ENCODE measurements at regions of chr15 and their contacts with region 1.

Region 1: GRCh38 chr15:59751552-59752413 is 62.7 kb upstream of the BNIP2 start:
- DNase-seq: peak in 2 of 9 experiments; percentile 69 to 81
- ATAC-seq: peak; percentile 98
- H3K4me3 ChIP-seq: no peak overlapping the region
- H3K4me3 Mint-ChIP-seq: no peak overlapping the region
- H3K27ac ChIP-seq: no peak overlapping the region
- H3K27ac Mint-ChIP-seq: peak overlapping the region; percentile 49
- H3K4me1 ChIP-seq: peaks cover 6% of the 10 kb centered on the region
- H3K4me1 Mint-ChIP-seq: peaks cover 9% of the 10 kb centered on the region
- H3K27me3 ChIP-seq: no peaks in the 10 kb centered on the region
- H3K27me3 Mint-ChIP-seq: peaks cover 3% of the 10 kb centered on the region
- CTCF ChIP-seq: peak; percentile 95

Region 2: GRCh38 chr15:59553879-59554735 is 197.7 kb before region 1 on chr15:
- CTCF ChIA-PET with region 1: no interaction called
- POLR2A ChIA-PET with region 1: no interaction called
- intact Hi-C with region 1: no loop called
- DNase-seq: no peak
- ATAC-seq: no peak
- H3K4me3 ChIP-seq: no peak overlapping the region
- H3K4me3 Mint-ChIP-seq: no peak overlapping the region
- H3K27ac ChIP-seq: no peak overlapping the region
- H3K27ac Mint-ChIP-seq: no peak overlapping the region
- H3K4me1 ChIP-seq: no peaks in the 10 kb centered on the region
- H3K4me1 Mint-ChIP-seq: peaks cover 2% of the 10 kb centered on the region
- H3K27me3 ChIP-seq: no peaks in the 10 kb centered on the region
- H3K27me3 Mint-ChIP-seq: peaks cover 6% of the 10 kb centered on the region
- CTCF ChIP-seq: no peak

Region 3: GRCh38 chr15:59741274-59741906 is 10.4 kb before region 1 on chr15:
- CTCF ChIA-PET with region 1: interaction called, 18 read pairs
- POLR2A ChIA-PET with region 1: no interaction called
- intact Hi-C with region 1: no loop called
- DNase-seq: peak in 2 of 9 experiments; percentile 17 to 33
- ATAC-seq: no peak
- H3K4me3 ChIP-seq: no peak overlapping the region
- H3K4me3 Mint-ChIP-seq: no peak overlapping the region
- H3K27ac ChIP-seq: no peak overlapping the region
- H3K27ac Mint-ChIP-seq: no peak overlapping the region
- H3K4me1 ChIP-seq: no peaks in the 10 kb centered on the region
- H3K4me1 Mint-ChIP-seq: no peaks in the 10 kb centered on the region
- H3K27me3 ChIP-seq: no peaks in the 10 kb centered on the region
- H3K27me3 Mint-ChIP-seq: peaks cover 10% of the 10 kb centered on the region
- CTCF ChIP-seq: no peak

Region 4: GRCh38 chr15:59797756-59798604 is 46.2 kb after region 1 on chr15:
- CTCF ChIA-PET with region 1: interaction called, 16 read pairs
- POLR2A ChIA-PET with region 1: no interaction called
- intact Hi-C with region 1: loop called (anchors 1 to 5 kb)
- DNase-seq: no peak
- ATAC-seq: no peak
- H3K4me3 ChIP-seq: peak overlapping the region in 1 of 2 experiments; percentile 11
- H3K4me3 Mint-ChIP-seq: peak overlapping the region; percentile 49
- H3K27ac ChIP-seq: peak overlapping the region; percentile 21 to 37
- H3K27ac Mint-ChIP-seq: peak overlapping the region; percentile 85
- H3K4me1 ChIP-seq: peaks cover 66% of the 10 kb centered on the region
- H3K4me1 Mint-ChIP-seq: peaks cover 76% of the 10 kb centered on the region
- H3K27me3 ChIP-seq: no peaks in the 10 kb centered on the region
- H3K27me3 Mint-ChIP-seq: no peaks in the 10 kb centered on the region
- CTCF ChIP-seq: no peak

Region 5: DNA sequence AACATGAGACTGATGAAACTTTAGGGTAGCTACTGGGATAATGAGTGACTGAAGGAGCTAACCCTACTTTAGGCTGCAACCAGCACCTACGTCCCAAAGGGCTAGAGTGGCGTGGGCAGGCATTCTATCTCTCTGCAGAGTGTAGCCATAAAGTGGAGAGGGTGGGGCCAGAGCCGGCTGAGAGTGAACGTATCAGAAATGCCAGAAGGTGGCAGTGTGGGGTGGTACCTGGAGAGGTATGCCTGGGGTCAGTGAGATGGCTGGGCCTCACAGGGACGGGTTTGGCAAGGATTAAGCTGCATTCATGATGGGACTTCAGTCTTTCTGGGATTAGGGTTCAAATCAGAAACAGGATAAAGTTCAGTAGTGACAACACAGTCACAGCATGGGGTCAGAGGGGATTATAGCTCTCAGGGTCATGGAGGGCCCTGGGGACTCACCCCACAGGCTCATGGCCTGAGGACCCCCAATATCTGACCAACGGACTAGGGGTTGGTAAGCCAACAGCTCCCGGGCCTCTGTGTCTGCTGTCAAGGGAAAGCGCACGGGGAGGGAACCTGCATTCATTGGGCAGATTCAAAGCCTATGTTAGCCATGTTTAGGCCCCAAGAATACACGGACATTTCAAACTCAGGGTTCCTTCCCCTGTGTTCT is 165.8 kb after region 1 on chr15:
- CTCF ChIA-PET with region 1: interaction called, 94 read pairs
- POLR2A ChIA-PET with region 1: interaction called, 3 read pairs
- intact Hi-C with region 1: loop called (anchors 1 kb)
- DNase-seq: peak; percentile 43 to 77 (median 69)
- ATAC-seq: peak; percentile 74
- H3K4me3 ChIP-seq: no peak overlapping the region
- H3K4me3 Mint-ChIP-seq: no peak overlapping the region
- H3K27ac ChIP-seq: no peak overlapping the region
- H3K27ac Mint-ChIP-seq: no peak overlapping the region
- H3K4me1 ChIP-seq: peaks cover 9% of the 10 kb centered on the region
- H3K4me1 Mint-ChIP-seq: peaks cover 18% of the 10 kb centered on the region
- H3K27me3 ChIP-seq: no peaks in the 10 kb centered on the region
- H3K27me3 Mint-ChIP-seq: peaks cover 10% of the 10 kb centered on the region
- CTCF ChIP-seq: peak; percentile 71

Region 6: GRCh38 chr15:59997070-59997701 is 245.4 kb after region 1 on chr15:
- CTCF ChIA-PET with region 1: interaction called, 4 read pairs
- POLR2A ChIA-PET with region 1: no interaction called
- intact Hi-C with region 1: loop called in 1 of 2 experiments (anchors 5 kb)
- DNase-seq: peak in 7 of 9 experiments; percentile 34 to 75 (median 63)
- ATAC-seq: peak; percentile 81
- H3K4me3 ChIP-seq: peak overlapping the region in 1 of 2 experiments; percentile 22
- H3K4me3 Mint-ChIP-seq: peak overlapping the region; percentile 26
- H3K27ac ChIP-seq: no peak overlapping the region
- H3K27ac Mint-ChIP-seq: no peak overlapping the region
- H3K4me1 ChIP-seq: peaks cover 27% of the 10 kb centered on the region
- H3K4me1 Mint-ChIP-seq: peaks cover 22% of the 10 kb centered on the region
- H3K27me3 ChIP-seq: peaks cover 85 to 94% of the 10 kb centered on the region in 2 experiments
- H3K27me3 Mint-ChIP-seq: peaks cover 91% of the 10 kb centered on the region
- CTCF ChIP-seq: no peak

Region 7: DNA sequence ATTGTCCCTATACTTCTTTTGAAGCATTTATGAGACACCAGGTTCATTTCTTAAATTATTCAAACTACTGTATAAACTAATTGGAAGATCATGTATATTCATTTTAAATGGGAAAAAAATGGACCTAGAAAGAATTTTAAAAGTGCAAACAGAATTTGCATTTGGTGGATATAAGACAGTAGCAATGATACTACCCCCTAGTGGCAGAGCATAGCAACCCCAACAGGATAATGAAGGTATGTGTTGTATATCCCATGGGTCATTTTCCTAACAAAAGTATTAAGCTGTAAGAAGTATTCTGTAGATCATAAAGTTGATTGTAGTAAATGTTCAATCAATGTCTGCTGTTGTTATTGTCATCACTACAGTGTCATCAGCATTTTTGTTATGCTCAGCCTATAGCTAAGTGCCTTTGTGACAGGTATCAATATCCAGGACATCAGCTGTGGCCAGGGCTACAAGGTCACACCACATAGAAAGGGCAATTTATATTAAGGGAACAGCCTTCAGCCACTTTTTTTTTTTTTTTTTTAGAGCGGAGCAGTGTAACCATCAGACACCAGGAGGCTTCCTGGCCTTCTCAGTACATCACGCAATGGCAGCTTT is 428.1 kb after region 1 on chr15:
- CTCF ChIA-PET with region 1: interaction called, 33 read pairs
- POLR2A ChIA-PET with region 1: no interaction called
- intact Hi-C with region 1: loop called (anchors 1 kb)
- DNase-seq: peak in 5 of 9 experiments; percentile 3 to 70 (median 34)
- ATAC-seq: peak; percentile 63
- H3K4me3 ChIP-seq: no peak overlapping the region
- H3K4me3 Mint-ChIP-seq: no peak overlapping the region
- H3K27ac ChIP-seq: no peak overlapping the region
- H3K27ac Mint-ChIP-seq: no peak overlapping the region
- H3K4me1 ChIP-seq: no peaks in the 10 kb centered on the region
- H3K4me1 Mint-ChIP-seq: no peaks in the 10 kb centered on the region
- H3K27me3 ChIP-seq: no peaks in the 10 kb centered on the region
- H3K27me3 Mint-ChIP-seq: peaks cover 9% of the 10 kb centered on the region
- CTCF ChIP-seq: peak; percentile 94

Measured in CD8-positive, alpha-beta T cell (primary cell).